ENCODE measurements at regions of chr13 and their contacts with region 1.

Region 1: GRCh38 chr13:95176611-95177259 is 124.5 kb downstream of the ABCC4 start:
- DNase-seq: no peak
- H3K4me3 ChIP-seq: no peak overlapping the region
- H3K27ac ChIP-seq: no peak overlapping the region
- H3K4me1 ChIP-seq: no peaks in the 10 kb centered on the region
- H3K27me3 ChIP-seq: no peaks in the 10 kb centered on the region
- CTCF ChIP-seq: no peak
- POLR2A ChIP-seq: no peak

Region 2: GRCh38 chr13:95118541-95119324 is 58.0 kb before region 1 on chr13:
- intact Hi-C with region 1: loop called (anchors 2 kb)
- DNase-seq: no peak
- H3K4me3 ChIP-seq: no peak overlapping the region
- H3K27ac ChIP-seq: no peak overlapping the region
- H3K4me1 ChIP-seq: no peaks in the 10 kb centered on the region
- H3K27me3 ChIP-seq: no peaks in the 10 kb centered on the region
- CTCF ChIP-seq: no peak
- POLR2A ChIP-seq: no peak

Measured in breast epithelium (tissue), 4 donors.